ENCODE measurements at regions of chr16 and their contacts with region 1.

Region 1: DNA sequence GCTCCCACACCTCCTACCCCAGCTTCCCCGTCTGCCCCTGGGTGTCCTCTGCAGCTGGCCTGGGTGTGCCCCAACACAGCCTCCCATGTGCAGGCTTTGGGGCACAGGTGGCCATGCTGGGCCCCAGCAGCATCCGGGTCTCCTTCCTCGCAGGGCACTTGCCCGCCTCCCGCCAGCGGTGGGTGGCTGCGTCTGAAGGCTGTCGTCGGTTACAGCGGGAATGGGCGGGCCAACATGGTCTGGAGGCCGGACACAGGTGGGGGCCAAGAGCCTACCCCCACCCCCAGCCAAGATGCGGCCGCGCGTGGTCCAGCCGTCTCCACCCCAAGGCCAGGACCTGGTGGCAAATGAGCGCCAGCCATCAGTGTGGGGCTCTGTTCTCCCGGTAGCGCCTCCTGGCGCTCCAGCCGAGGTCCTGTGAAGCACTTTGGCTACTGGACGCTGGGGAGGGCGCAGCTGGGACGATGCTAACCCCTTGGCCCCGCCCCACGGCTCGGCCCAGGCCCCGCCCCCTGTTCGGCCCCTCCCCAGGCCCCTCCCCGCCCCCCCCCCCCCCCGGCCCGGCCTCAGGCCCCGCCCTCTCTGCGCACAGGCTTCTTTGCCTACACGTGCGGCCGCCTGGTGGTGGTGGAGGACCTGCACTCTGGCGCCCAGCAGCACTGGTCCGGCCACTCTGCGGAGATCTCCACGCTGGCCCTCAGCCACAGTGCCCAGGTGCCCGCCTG is 7.3 kb upstream of the RHOT2 start:
- DNase-seq: no peak
- H3K4me3 ChIP-seq: no peak overlapping the region
- CTCF ChIP-seq: peak; percentile 66

Region 2: DNA sequence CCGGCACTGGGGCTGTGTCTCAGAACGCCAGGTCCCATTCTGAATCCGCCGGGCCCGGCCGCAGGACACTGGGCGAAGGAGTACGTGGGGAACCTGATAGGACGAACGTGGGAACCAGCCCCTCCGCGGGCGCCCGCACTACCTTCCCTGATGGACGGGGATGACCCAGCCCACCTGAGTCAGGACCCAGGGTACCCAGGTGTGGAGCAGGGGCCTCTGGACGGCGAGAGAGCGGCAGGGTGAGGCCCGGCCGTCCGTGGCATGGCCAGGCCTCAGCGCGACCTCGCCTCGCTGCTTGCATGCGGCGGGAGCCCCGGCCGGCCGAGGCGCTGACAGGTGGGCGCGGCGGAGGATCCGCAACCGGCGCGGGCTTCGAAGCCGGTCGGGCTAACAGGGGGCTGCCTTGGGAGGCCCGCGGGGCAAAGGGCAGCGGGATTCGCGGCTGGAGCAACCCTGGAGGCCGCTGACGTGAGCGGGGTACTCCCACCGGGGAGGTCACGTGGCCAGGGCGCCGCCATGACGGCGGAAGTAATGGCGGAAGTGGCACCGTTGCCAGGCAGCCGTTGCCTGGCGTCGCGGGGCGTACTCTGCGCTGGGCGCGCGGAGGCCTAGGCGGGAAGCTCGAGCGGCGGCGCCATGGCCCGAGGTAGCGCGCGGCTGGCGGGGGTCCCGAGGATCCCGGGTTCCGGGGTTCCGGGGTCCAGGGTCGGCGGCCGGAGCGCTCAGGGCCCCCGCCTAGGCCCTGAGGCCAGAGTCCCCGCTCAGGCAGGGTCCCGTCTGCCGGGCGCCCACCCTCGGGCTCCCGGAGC is 11.6 kb before region 1 on chr16 and contains the start of gene WDR90:
- CTCF ChIA-PET with region 1: interaction called, 11 read pairs
- POLR2A ChIA-PET with region 1: no interaction called
- DNase-seq: peak; percentile 28
- H3K4me3 ChIP-seq: peak within 1 kb of the TSS; percentile 74
- CTCF ChIP-seq: no peak

Measured in AG04449 (cell line).